Activated B cell treated with CpG ODN at 0.5 μM for 24 hours (primary cell): ENCODE measurements at regions of chr3 and their contacts with region 1.

Region 1: DNA sequence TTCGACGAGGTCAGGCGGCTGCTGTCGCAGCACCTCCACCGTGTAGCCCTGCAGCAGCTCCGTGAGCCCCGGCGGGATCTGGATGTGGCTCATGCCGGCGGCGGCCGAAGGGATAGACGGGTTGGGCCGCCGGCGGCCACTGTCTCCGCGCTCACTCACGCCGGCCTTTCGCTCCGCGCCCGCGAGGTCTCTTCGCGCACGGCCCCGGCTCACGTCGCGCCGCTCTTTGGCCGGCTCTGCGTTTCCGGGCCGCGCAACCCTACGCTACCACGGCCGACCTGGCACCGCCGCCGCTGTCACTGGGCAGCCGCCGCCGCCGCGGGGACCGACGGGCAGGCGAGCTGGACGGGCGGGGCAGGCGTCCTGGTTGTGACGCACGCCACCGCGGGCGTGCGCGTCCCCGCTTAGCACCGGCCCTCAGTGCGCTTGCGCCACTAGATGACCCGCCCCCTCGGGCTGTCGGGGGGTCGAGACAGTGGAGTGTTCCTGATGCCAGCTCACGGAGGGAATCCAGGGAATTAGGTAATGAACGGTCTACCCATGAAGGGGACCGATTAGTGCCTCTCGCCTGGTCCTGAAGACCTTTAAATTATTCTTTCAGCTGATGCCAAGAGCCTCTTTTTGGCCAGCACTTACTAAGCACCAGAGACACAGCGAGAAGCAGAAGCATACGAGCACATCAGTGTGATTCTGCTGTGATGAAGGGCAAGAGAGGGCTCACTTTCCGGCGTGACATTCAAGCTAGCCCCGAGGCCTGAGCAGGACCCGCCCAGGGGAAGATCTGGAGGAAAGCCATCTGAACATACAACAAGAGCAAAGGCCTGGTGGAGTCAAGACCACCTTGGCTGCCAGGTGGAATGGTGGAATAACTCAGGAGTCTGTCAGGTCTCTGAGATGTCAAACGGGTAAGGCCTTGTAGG is at the start of gene PRKAR2A:
- DNase-seq: peak; percentile 88
- ATAC-seq: peak; percentile 92
- H3K4me3 Mint-ChIP-seq: peak within 1 kb of the TSS; percentile 89
- H3K27ac Mint-ChIP-seq: peak within 1 kb of the TSS; percentile 94
- H3K4me1 Mint-ChIP-seq: peaks cover 30% of the 10 kb centered on the region
- H3K27me3 Mint-ChIP-seq: no peaks in the 10 kb centered on the region
- CTCF ChIP-seq: no peak
- total RNA-seq, gene PRKAR2A: 27.4 and 28.0 TPM in 2 replicates

Region 2: GRCh38 chr3:48716982-48717746 is 130.6 kb before region 1 on chr3 and contains the start of gene IP6K2:
- CTCF ChIA-PET with region 1: no interaction called
- POLR2A ChIA-PET with region 1: interaction called, 10 read pairs
- intact Hi-C with region 1: no loop called
- DNase-seq: peak; percentile 98
- ATAC-seq: peak; percentile 99
- H3K4me3 Mint-ChIP-seq: peak within 1 kb of the TSS; percentile 98
- H3K27ac Mint-ChIP-seq: peak within 1 kb of the TSS; percentile 94
- H3K4me1 Mint-ChIP-seq: peaks cover 37% of the 10 kb centered on the region
- H3K27me3 Mint-ChIP-seq: peaks cover 4% of the 10 kb centered on the region
- CTCF ChIP-seq: no peak
- total RNA-seq, gene IP6K2: 83.2 and 94.1 TPM in 2 replicates

Region 3: GRCh38 chr3:48811524-48811923 is 36.2 kb before region 1 on chr3:
- CTCF ChIA-PET with region 1: no interaction called
- POLR2A ChIA-PET with region 1: interaction called, 10 read pairs
- intact Hi-C with region 1: loop called (anchors 1 kb)
- DNase-seq: no peak
- ATAC-seq: no peak
- H3K4me3 Mint-ChIP-seq: no peak overlapping the region
- H3K27ac Mint-ChIP-seq: no peak overlapping the region
- H3K4me1 Mint-ChIP-seq: peaks cover 27% of the 10 kb centered on the region
- H3K27me3 Mint-ChIP-seq: no peaks in the 10 kb centered on the region
- CTCF ChIP-seq: no peak

Region 4: DNA sequence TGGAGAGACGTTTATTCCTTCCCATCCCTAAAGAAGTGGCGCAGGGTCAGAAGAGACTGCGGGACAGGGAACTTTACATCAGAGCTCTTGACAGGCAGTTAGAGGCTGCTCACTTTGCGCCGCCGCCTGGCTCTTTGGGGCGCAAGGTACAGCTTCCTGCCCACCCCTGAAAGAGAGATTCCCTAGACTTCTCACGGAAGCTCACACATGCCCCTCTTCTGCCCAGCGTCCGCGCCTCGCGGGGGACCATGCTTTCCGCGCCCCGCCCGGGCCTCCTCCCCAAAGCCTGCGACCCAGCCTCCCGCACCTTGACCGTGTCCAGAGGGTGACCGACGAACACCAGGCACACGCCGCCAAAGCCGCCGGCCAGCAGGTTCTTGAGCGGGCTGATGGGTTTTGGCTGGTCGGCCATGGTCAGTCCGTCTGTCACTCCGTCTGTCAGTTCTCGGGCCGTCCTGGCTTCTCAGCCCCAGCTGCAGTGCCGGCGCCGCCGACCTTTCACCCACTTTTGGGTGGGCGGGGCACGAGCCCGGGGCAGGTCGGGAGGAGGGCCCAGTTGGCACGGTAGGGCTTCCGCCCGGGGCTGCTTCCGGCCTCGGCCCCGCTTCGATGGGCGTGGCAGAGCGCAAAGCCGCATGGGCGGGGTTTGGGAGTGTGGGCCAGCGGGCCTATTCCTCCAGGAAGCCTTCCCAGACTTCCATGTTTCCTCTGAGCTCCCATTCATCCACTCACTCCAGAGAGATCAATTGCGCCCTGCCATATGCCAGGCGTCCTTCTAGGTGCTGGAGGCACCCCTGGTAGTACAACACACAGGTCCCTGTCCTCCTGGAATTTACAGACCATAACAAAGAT is 50.8 kb after region 1 on chr3 and contains the start of gene SLC25A20:
- CTCF ChIA-PET with region 1: no interaction called
- POLR2A ChIA-PET with region 1: interaction called, 6 read pairs
- intact Hi-C with region 1: loop called (anchors 1 kb)
- DNase-seq: peak; percentile 88
- ATAC-seq: peak; percentile 99
- H3K4me3 Mint-ChIP-seq: peak within 1 kb of the TSS; percentile 92
- H3K27ac Mint-ChIP-seq: peak within 1 kb of the TSS; percentile 83
- H3K4me1 Mint-ChIP-seq: peaks cover 38% of the 10 kb centered on the region
- H3K27me3 Mint-ChIP-seq: no peaks in the 10 kb centered on the region
- CTCF ChIP-seq: no peak
- total RNA-seq, gene SLC25A20: 9.9 and 11.0 TPM in 2 replicates

Region 5: DNA sequence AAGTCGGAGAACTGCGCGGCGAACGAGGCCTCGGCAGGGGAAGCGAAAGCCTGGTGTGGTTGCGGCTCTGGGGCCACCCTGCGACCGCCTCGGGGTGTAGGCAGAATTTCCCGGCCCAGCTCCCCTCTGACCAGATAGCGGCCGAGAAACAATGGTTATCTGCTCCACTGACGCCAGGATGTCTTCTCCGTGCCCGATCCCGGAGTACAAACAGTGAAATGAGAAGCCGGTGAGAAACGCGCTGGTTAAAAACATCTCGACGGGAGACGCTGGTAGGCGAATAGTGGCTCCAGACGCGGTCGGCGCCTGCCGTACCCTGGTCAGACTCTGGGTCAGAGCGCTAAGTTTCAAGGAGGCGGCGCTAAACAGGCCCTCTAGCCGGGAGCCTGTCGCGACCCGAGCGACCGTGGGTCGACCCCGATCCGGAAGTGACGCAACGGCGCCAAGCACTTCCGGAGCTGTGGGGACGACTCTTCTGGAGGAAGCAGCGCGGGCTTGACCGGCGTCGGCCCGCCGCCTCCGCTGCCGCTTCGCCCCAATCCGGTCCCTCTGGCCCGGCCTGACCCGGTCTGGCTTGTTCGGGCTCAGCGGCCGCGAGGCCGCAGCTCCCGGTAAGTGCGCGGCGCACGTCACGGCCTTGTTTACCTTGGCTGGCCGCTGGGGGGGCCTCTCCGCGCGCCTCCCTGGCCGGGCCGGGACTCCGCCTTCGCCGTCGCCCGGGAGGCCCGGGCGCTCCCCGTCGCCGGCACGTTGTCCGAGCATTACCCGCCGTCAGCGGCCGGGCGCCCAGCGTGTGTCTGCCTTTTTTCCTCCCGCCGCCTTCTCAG is 70.8 kb after region 1 on chr3 and contains the start of gene ARIH2:
- CTCF ChIA-PET with region 1: interaction called, 3 read pairs
- POLR2A ChIA-PET with region 1: interaction called, 34 read pairs
- intact Hi-C with region 1: loop called (anchors 1 kb)
- DNase-seq: peak; percentile 91
- ATAC-seq: peak; percentile 85
- H3K4me3 Mint-ChIP-seq: peak within 1 kb of the TSS; percentile 99
- H3K27ac Mint-ChIP-seq: peak within 1 kb of the TSS; percentile 98
- H3K4me1 Mint-ChIP-seq: peaks cover 32% of the 10 kb centered on the region
- H3K27me3 Mint-ChIP-seq: no peaks in the 10 kb centered on the region
- CTCF ChIP-seq: no peak
- total RNA-seq, gene ARIH2: 96.6 and 112 TPM in 2 replicates

Region 6: DNA sequence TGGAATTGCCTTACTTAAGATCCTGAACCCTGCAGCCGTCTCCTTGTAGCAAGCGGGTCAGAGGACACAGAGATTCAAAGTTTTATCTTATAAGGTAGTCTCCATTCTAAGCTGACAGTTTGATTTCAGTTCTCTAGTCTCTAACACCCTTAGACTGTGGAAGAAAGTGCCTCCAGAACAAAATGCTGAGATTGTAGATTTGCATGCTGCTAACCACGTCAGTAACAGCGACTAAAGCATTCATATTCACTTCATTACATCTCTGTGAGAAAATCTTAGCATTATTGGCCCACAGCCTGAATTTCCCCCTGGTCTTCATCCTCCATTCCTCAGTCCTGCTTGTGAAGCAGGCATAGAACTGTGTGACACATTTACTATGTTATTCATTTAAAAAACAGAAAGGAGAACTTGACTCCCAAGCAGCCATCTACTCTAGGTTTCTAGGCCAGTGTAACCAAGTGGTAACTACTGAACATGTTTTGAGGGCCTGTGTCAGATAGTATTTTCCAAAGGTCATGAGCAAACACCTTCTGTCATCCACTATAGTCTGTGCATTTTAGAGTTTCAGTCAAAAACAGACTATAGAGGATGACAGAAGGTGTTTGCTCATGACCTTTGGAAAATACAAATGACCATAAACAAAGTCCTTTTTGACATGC is 98.3 kb after region 1 on chr3:
- CTCF ChIA-PET with region 1: no interaction called
- POLR2A ChIA-PET with region 1: no interaction called
- intact Hi-C with region 1: no loop called
- DNase-seq: no peak
- ATAC-seq: no peak
- H3K4me3 Mint-ChIP-seq: no peak overlapping the region
- H3K27ac Mint-ChIP-seq: peak overlapping the region; percentile 59
- H3K4me1 Mint-ChIP-seq: peaks cover 16% of the 10 kb centered on the region
- H3K27me3 Mint-ChIP-seq: no peaks in the 10 kb centered on the region
- CTCF ChIP-seq: no peak